ENCODE measurements at regions of chr1 and their contacts with region 1.

Region 1: GRCh38 chr1:12619792-12620487 is 1.9 kb upstream of the DHRS3 start:
- DNase-seq: peak; percentile 87
- ATAC-seq: peak; percentile 72
- H3K4me3 ChIP-seq: no peak overlapping the region
- H3K27ac ChIP-seq: no peak overlapping the region
- H3K4me1 ChIP-seq: peaks cover 18% of the 10 kb centered on the region
- H3K27me3 ChIP-seq: no peaks in the 10 kb centered on the region
- CTCF ChIP-seq: peak; percentile 96
- POLR2A ChIP-seq: peak; percentile 54; the same call in 1 of the 2 replicates
- RAD21 ChIP-seq: peak; percentile 99

Region 2: DNA sequence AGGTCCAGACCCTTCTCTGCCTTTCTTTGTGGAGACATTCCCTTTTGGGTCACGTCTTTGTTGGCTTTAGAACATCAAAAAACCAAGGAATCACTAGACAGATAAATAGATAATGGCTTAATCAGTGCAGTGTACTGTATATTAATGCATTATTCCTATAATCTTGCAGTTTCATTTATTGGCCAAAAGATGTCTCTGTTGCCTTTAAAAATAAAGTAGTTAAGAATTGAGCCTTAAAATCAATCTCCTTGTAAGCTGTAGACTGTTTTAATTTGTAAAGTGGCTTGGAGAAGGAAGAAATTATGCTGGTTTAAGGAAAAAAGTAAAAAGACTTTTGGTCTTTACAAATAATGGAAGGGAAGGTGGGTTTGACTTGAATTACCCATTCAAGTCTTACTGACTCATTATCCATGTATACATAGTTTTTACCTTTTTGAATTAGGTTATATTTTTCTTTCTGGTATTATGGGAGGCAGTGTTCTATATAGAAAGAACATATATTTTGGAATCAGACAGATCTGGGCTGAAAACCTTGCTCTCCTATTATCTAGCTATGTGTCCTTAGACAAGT is 305.5 kb before region 1 on chr1:
- CTCF ChIA-PET with region 1: interaction called, 5 read pairs
- POLR2A ChIA-PET with region 1: no interaction called
- dilution Hi-C with region 1: no loop called
- in situ Hi-C with region 1: loop called (anchors 5 kb)
- intact Hi-C with region 1: loop called (anchors 1 kb)
- DNase-seq: peak; percentile 54
- ATAC-seq: peak; percentile 85
- H3K4me3 ChIP-seq: no peak overlapping the region
- H3K27ac ChIP-seq: no peak overlapping the region
- H3K4me1 ChIP-seq: no peaks in the 10 kb centered on the region; the same call in 1 of the 2 replicates
- H3K27me3 ChIP-seq: no peaks in the 10 kb centered on the region
- CTCF ChIP-seq: peak; percentile 63
- POLR2A ChIP-seq: no peak
- RAD21 ChIP-seq: peak; percentile 54

Region 3: GRCh38 chr1:12464598-12465056 is 155.3 kb before region 1 on chr1:
- CTCF ChIA-PET with region 1: interaction called, 3 read pairs
- POLR2A ChIA-PET with region 1: no interaction called
- dilution Hi-C with region 1: no loop called
- in situ Hi-C with region 1: no loop called
- intact Hi-C with region 1: loop called (anchors 5 kb)
- DNase-seq: peak; percentile 97
- ATAC-seq: peak; percentile 88
- H3K4me3 ChIP-seq: no peak overlapping the region
- H3K27ac ChIP-seq: peak overlapping the region; percentile 96
- H3K4me1 ChIP-seq: peaks cover 34% of the 10 kb centered on the region
- H3K27me3 ChIP-seq: no peaks in the 10 kb centered on the region
- CTCF ChIP-seq: no peak
- POLR2A ChIP-seq: no peak
- RAD21 ChIP-seq: no peak

Region 4: GRCh38 chr1:12539705-12540579 is 80.0 kb before region 1 on chr1:
- CTCF ChIA-PET with region 1: no interaction called
- POLR2A ChIA-PET with region 1: interaction called, 3 read pairs
- dilution Hi-C with region 1: no loop called
- in situ Hi-C with region 1: no loop called
- intact Hi-C with region 1: loop called (anchors 1 kb)
- DNase-seq: peak; percentile 93
- ATAC-seq: peak; percentile 85
- H3K4me3 ChIP-seq: no peak overlapping the region
- H3K27ac ChIP-seq: peak overlapping the region; percentile 68
- H3K4me1 ChIP-seq: peaks cover 23% of the 10 kb centered on the region
- H3K27me3 ChIP-seq: peaks cover 3% of the 10 kb centered on the region; the same call in 1 of the 2 replicates
- CTCF ChIP-seq: peak; percentile 32
- POLR2A ChIP-seq: no peak
- RAD21 ChIP-seq: peak; percentile 38

Region 5: GRCh38 chr1:12556368-12556930 is 63.5 kb before region 1 on chr1:
- CTCF ChIA-PET with region 1: no interaction called
- POLR2A ChIA-PET with region 1: interaction called, 5 read pairs
- dilution Hi-C with region 1: no loop called
- in situ Hi-C with region 1: loop called (anchors 10 kb)
- intact Hi-C with region 1: loop called (anchors 5 kb)
- DNase-seq: peak; percentile 93
- ATAC-seq: peak; percentile 92
- H3K4me3 ChIP-seq: no peak overlapping the region
- H3K27ac ChIP-seq: peak overlapping the region; percentile 94
- H3K4me1 ChIP-seq: peaks cover 18% of the 10 kb centered on the region
- H3K27me3 ChIP-seq: no peaks in the 10 kb centered on the region
- CTCF ChIP-seq: no peak
- POLR2A ChIP-seq: no peak
- RAD21 ChIP-seq: no peak

Region 6: DNA sequence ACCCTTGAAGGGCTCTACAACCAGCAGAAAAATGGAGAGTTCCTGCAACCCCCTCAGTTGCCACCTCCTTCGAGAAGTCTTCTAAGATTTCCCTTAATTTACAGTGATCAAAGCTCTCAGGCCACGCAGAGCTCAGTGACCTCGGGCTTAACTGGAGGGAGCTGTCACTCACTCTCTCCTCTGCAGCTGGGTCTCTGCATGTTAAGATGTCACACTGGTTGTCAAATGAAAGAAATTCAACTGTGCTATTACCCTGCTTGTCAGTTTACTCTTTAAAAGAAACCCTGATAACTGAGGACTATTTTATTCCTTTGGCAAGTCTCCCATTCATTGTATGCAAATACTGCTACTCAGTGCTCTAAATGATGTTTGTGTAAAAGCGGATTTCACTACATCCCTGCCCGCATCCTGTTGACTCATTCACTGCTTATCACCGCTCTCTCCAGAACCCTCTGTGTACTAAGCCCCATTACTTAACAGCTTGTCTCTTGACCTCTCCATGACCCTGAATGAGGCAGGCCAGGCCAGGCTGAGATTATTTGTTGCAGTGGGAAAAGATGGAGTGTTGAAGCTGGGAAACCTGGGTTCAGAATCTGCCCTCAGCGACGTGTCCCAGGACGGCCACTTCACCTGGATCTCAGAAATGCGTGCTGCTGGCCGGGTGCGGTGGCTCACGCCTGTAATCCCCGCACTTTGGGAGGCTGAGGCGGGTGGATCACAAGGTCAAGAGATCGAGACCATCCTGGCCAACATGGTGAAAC is 15.6 kb before region 1 on chr1:
- CTCF ChIA-PET with region 1: interaction called, 3 read pairs
- POLR2A ChIA-PET with region 1: interaction called, 6 read pairs
- dilution Hi-C with region 1: no loop called
- in situ Hi-C with region 1: no loop called
- intact Hi-C with region 1: loop called (anchors 1 kb)
- DNase-seq: peak; percentile 99
- ATAC-seq: peak; percentile 83
- H3K4me3 ChIP-seq: no peak overlapping the region
- H3K27ac ChIP-seq: peak overlapping the region; percentile 33; the same call in 1 of the 2 replicates
- H3K4me1 ChIP-seq: peaks cover 31% of the 10 kb centered on the region
- H3K27me3 ChIP-seq: no peaks in the 10 kb centered on the region
- CTCF ChIP-seq: no peak
- POLR2A ChIP-seq: no peak
- RAD21 ChIP-seq: no peak